ENCODE measurements at regions of chr7 and their contacts with region 1.

Region 1: GRCh38 chr7:32942786-32943653 is 14.2 kb upstream of the FKBP9 start:
- DNase-seq: no peak
- H3K4me3 ChIP-seq: peak overlapping the region; percentile 78 to 93 (median 87)
- H3K27ac ChIP-seq: peak overlapping the region; percentile 90 to 98 (median 94)
- H3K4me1 ChIP-seq: peaks cover 0 to 40% (median 19%) of the 10 kb centered on the region in 3 donors
- H3K27me3 ChIP-seq: no peaks in the 10 kb centered on the region
- CTCF ChIP-seq: peak; percentile 46 to 78 (median 66)
- POLR2A ChIP-seq: peak in 2 of 4 donors; percentile 10 to 23

Region 2: DNA sequence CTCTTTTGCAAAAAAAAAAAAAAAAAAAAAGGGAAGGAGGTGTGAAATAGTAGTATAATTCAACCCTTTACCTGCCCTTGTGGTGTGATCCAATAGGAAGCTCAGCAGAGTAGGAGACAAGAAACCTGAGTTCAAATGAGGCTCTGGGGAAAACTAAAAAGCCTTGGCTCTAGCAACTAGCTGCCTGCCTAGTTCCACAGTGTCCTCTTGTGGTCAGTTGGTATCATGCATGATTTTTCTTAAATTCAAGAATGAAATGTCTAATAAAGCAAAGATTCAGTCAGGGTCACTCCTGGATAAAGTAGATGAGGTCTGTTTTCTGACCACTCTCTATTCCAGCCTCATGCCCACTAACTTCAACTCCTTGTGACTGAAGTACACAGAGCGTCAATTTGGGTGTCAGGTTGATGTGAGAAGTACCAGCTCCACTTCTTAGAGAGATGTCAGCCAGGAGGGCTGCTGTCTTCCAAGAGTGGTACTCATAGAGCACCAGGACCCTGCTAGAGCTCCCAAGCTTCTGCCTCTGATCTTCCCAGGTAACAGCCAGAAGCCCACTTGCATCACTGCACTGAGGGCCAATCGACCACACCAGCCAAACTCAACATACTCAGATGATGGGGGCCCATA is 463.3 kb before region 1 on chr7:
- intact Hi-C with region 1: no loop called
- DNase-seq: no peak
- H3K4me3 ChIP-seq: no peak overlapping the region
- H3K27ac ChIP-seq: no peak overlapping the region
- H3K4me1 ChIP-seq: no peaks in the 10 kb centered on the region
- H3K27me3 ChIP-seq: no peaks in the 10 kb centered on the region
- CTCF ChIP-seq: peak in 5 of 6 experiments; percentile 37 to 82 (median 46)
- POLR2A ChIP-seq: no peak

Region 3: DNA sequence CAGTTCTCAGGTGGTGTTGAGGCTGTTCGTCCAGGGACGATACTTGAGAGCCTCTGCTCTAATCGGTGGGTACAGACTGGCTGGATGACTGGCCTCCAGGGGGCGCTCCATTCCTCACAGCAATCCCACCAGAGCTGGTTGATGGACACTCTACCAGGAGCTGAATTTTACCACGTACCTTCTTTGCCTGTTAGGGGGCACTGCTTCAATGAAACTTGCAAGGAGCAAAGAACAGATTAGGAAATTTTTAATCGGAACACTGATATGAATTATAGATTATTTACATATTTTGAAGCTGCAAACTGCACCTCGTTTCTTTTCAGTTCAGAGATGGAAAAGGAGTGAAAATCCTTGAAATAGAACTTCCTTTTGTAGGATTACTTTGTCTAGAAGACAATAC is 96.3 kb before region 1 on chr7:
- intact Hi-C with region 1: loop called (anchors 10 kb)
- DNase-seq: peak; percentile 48
- H3K4me3 ChIP-seq: peak overlapping the region in 1 of 4 donors; percentile 14
- H3K27ac ChIP-seq: no peak overlapping the region
- H3K4me1 ChIP-seq: peaks cover 0 to 11% (median 8%) of the 10 kb centered on the region in 3 donors
- H3K27me3 ChIP-seq: no peaks in the 10 kb centered on the region
- CTCF ChIP-seq: peak; percentile 78 to 92 (median 82)
- POLR2A ChIP-seq: no peak

Region 4: DNA sequence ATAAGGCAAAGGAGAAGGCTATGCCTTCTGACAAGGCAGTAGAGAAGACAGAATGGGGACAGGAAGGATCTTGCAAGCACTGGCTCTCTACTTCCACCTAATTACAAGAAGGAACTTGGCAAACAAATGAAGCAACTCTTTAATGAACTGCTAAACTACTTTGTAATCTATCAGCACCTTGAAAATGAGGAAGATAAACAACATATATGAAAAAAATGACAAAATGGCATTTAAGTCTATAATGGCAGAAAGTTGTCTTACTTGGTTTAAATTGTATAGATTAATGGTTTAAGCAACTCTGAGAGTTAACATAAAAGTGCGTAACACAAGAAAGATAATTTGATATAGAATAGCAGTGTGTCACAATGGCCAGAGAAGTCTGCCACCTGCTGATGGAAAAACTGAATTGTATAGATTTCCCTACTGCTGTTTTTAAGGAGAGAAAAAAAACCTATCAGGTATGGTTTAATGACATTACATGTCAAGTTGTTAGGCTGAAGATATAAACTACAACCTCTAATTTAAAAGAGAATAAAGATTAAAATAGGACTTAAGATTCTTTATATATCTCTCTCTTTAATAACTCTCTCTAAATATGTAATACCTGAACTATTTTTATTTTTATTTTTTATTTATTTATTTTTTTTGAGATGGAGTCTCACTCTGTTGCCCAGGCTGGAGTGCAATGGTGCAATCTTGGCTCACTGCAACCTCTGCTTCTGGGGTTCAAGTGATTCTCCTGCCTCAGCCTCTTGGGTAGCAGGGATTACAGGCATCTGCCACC is 107.7 kb after region 1 on chr7:
- intact Hi-C with region 1: loop called (anchors 10 kb)
- DNase-seq: no peak
- H3K4me3 ChIP-seq: peak overlapping the region in 2 of 4 donors; percentile 5 to 28
- H3K27ac ChIP-seq: peak overlapping the region in 3 of 4 donors; percentile 36 to 68 (median 59)
- H3K4me1 ChIP-seq: peaks cover 0 to 50% (median 22%) of the 10 kb centered on the region in 3 donors
- H3K27me3 ChIP-seq: no peaks in the 10 kb centered on the region
- CTCF ChIP-seq: peak in 5 of 6 experiments; percentile 56 to 78 (median 62)
- POLR2A ChIP-seq: no peak